ENCODE measurements at regions of chr17 and their contacts with region 1.

Region 1: GRCh38 chr17:19781488-19782458 is 33.7 kb upstream of the ALDH3A1 start:
- DNase-seq: no peak
- ATAC-seq: no peak
- H3K4me3 ChIP-seq: no peak overlapping the region
- H3K27ac ChIP-seq: no peak overlapping the region
- H3K4me1 ChIP-seq: no peaks in the 10 kb centered on the region
- H3K27me3 ChIP-seq: no peaks in the 10 kb centered on the region
- CTCF ChIP-seq: no peak
- POLR2A ChIP-seq: no peak
- RAD21 ChIP-seq: no peak

Region 2: DNA sequence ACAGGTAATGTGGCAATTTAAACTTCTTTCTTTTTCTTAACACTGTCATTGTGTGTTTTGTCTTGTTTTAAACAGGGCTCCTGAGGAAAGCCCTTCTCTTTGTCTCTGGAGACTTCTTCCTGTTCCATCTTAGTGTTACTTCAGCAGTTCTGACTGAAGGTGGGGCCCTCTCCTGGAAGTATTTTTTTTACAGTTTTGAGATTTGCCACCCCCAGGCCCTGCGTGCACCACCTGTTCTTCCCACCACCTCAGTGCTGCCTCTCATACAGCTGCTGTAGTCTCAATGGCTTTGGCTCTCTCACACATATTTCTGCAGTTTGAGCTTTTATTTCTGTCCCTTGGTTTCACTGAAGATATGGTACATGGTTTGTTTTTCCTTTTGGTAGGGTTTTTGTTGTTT is 18.8 kb after region 1 on chr17:
- CTCF ChIA-PET with region 1: no interaction called
- POLR2A ChIA-PET with region 1: interaction called, 12 read pairs
- dilution Hi-C with region 1: no loop called
- in situ Hi-C with region 1: no loop called
- intact Hi-C with region 1: no loop called
- DNase-seq: no peak
- ATAC-seq: no peak
- H3K4me3 ChIP-seq: no peak overlapping the region
- H3K27ac ChIP-seq: no peak overlapping the region
- H3K4me1 ChIP-seq: no peaks in the 10 kb centered on the region
- H3K27me3 ChIP-seq: no peaks in the 10 kb centered on the region
- CTCF ChIP-seq: no peak
- POLR2A ChIP-seq: no peak
- RAD21 ChIP-seq: no peak

Region 3: GRCh38 chr17:19812407-19812806 is 30.6 kb after region 1 on chr17:
- CTCF ChIA-PET with region 1: interaction called, 13 read pairs
- POLR2A ChIA-PET with region 1: no interaction called
- dilution Hi-C with region 1: no loop called
- in situ Hi-C with region 1: no loop called
- intact Hi-C with region 1: no loop called
- DNase-seq: peak; percentile 10
- ATAC-seq: peak; percentile 85
- H3K4me3 ChIP-seq: no peak overlapping the region
- H3K27ac ChIP-seq: no peak overlapping the region
- H3K4me1 ChIP-seq: no peaks in the 10 kb centered on the region
- H3K27me3 ChIP-seq: no peaks in the 10 kb centered on the region
- CTCF ChIP-seq: peak; percentile 31; the same call in 1 of the 2 replicates
- POLR2A ChIP-seq: no peak
- RAD21 ChIP-seq: peak; percentile 15; the same call in 1 of the 2 replicates

Region 4: GRCh38 chr17:19876529-19877161 is 94.9 kb after region 1 on chr17:
- CTCF ChIA-PET with region 1: no interaction called
- POLR2A ChIA-PET with region 1: no interaction called
- dilution Hi-C with region 1: no loop called
- in situ Hi-C with region 1: no loop called
- intact Hi-C with region 1: no loop called
- DNase-seq: no peak
- ATAC-seq: no peak
- H3K4me3 ChIP-seq: no peak overlapping the region
- H3K27ac ChIP-seq: no peak overlapping the region
- H3K4me1 ChIP-seq: no peaks in the 10 kb centered on the region
- H3K27me3 ChIP-seq: peaks cover 12% of the 10 kb centered on the region
- CTCF ChIP-seq: no peak
- POLR2A ChIP-seq: no peak
- RAD21 ChIP-seq: no peak

Region 5: DNA sequence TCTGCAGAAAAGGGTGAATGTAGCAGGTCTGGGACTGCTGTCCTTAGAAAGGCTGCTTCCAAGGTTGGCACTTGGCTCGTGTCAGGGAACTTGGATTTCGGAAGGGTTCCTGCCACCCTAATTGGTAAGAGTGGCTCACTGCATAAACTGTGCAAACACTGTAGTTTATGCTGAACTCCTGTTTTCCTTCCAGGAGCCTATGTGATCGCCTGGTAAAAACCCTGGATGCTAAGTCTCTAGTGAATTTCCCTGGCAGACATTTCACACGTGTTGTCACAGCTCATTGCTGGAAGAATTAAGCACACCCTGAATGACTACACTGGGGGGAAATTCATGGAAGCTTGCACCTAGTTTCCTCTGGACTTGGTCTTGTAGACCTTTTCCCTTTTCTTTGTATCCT is 367.5 kb after region 1 on chr17:
- CTCF ChIA-PET with region 1: no interaction called
- POLR2A ChIA-PET with region 1: no interaction called
- dilution Hi-C with region 1: no loop called
- in situ Hi-C with region 1: no loop called
- intact Hi-C with region 1: no loop called
- DNase-seq: no peak
- ATAC-seq: no peak; the same call in 1 of the 2 replicates
- H3K4me3 ChIP-seq: no peak overlapping the region
- H3K27ac ChIP-seq: no peak overlapping the region
- H3K4me1 ChIP-seq: no peaks in the 10 kb centered on the region
- H3K27me3 ChIP-seq: no peaks in the 10 kb centered on the region
- CTCF ChIP-seq: no peak
- POLR2A ChIP-seq: no peak
- RAD21 ChIP-seq: no peak